Activated T-helper 1 cell treated with anti-CD3 and anti-CD28 coated beads, Interleukin-12 subunit alpha, Interleukin-12 subunit beta, Interleukin-2, Interleukin-4 antibody, amounts not matched to agents 30 ng/mL and 10 ng/mL and 1 ng/mL, durations not matched to agents 14 hours and 24 hours and 36 hours (primary cell): ENCODE measurements at regions of chr7 and their contacts with region 1.

Region 1: GRCh38 chr7:123797673-123798527 is 47.1 kb upstream of the HYAL4 start:
- DNase-seq: no peak
- H3K4me3 Mint-ChIP-seq: no peak overlapping the region
- H3K27ac Mint-ChIP-seq: no peak overlapping the region
- H3K4me1 Mint-ChIP-seq: no peaks in the 10 kb centered on the region
- H3K27me3 Mint-ChIP-seq: no peaks in the 10 kb centered on the region

Region 2: DNA sequence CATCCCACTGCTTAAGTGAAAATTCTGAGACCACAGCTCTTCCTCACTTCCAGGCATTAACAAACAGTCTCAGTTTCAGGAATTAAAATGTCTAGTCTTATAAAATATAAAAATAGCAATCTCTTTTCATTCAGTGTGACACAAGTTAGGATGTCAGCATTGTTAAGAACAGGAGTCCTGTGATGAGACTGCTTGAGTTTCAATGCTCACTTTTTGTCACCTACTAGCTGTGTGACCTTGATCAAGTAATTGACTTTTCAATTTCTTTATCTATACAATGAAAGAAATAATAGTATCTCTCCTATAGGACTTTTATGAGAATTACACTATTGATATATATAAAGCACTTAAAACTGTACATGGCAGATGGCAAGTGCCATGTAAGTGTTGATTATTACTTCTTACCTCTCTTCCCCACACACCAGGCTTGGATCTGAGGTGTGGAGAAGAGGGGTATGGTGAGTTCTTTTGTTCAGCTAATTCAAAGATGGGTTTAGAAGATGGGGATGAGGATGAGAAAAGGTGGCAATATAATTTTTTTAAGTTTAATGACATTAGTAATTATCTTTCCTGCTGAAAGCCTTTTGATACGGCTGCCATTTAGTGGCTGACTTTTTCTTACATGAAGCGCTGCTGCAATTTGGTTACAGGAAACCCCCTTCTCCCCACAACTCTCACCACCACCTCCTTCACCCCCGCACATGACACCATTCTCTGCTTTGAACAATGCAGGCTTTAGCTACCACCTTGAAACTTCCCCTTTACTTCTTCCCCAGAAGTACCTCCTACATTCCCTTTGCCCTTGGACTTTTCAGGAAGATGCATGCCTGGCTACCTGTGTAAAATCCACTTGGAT is 26.2 kb after region 1 on chr7:
- intact Hi-C with region 1: loop called (anchors 2 kb)
- DNase-seq: peak; percentile 44
- H3K4me3 Mint-ChIP-seq: peak overlapping the region; percentile 38
- H3K27ac Mint-ChIP-seq: peak overlapping the region; percentile 77
- H3K4me1 Mint-ChIP-seq: peaks cover 25% of the 10 kb centered on the region
- H3K27me3 Mint-ChIP-seq: peaks cover 7% of the 10 kb centered on the region